ENCODE measurements at regions of chr12 and their contacts with region 1.

Region 1: DNA sequence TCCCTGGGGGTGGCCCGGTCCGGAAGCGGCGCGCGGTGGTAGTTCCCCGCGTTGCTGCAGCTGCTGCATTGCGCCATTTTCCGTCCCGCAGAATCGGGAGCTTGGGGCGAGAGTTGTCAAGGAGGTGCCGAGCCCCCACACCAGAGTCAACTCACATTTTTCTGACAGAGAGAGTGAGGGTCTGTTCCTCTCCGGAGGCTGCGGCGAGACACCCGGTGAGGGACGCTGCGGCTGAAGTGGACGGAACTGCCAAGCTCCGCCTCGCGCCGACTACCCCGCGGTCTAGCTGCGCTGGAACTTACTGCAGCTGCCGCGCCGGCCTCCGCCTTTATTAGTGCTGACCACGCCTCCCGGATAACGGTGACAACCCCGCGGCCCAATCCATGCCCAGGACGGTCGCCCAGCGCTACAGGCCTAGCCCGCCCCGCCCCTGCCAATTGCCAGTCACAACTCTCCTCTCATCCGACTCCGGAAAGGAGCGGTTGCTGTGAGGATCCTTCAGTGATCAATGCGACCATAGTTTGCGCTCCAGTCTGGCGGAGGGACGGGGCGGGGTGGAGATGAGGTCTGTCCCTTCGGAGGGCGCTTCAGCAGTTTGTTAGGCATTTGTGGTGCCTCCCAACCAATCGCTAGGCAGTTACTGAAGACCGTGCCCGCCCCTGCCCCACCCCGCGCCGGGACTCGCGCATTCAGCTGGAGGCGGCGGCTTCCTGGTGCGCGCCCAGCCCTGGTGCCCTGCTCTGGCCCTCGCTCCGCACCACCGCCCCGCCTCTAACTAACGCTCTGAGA is at the start of gene VAMP1:
- DNase-seq: peak; percentile 99
- ATAC-seq: peak; percentile 96
- H3K4me3 Mint-ChIP-seq: peak within 1 kb of the TSS; percentile 68
- H3K27ac Mint-ChIP-seq: peak within 1 kb of the TSS; percentile 93
- H3K4me1 Mint-ChIP-seq: peaks cover 20% of the 10 kb centered on the region
- H3K27me3 Mint-ChIP-seq: peaks cover 18% of the 10 kb centered on the region
- CTCF ChIP-seq: no peak
- total RNA-seq, gene VAMP1: 12.8 to 14.3 TPM (median 13.8 TPM) in 3 replicates

Region 2: GRCh38 chr12:6341417-6342139 is 129.0 kb before region 1 on chr12 and contains the start of gene TNFRSF1A:
- CTCF ChIA-PET with region 1: interaction called, 20 read pairs
- POLR2A ChIA-PET with region 1: interaction called, 18 read pairs
- DNase-seq: no peak
- ATAC-seq: peak; percentile 47
- H3K4me3 Mint-ChIP-seq: no peak within 1 kb of the TSS
- H3K27ac Mint-ChIP-seq: peak within 1 kb of the TSS; percentile 86
- H3K4me1 Mint-ChIP-seq: peaks cover 32% of the 10 kb centered on the region
- H3K27me3 Mint-ChIP-seq: no peaks in the 10 kb centered on the region
- CTCF ChIP-seq: no peak
- total RNA-seq, gene TNFRSF1A: 32.3 to 44.1 TPM (median 32.4 TPM) in 3 replicates

Region 3: DNA sequence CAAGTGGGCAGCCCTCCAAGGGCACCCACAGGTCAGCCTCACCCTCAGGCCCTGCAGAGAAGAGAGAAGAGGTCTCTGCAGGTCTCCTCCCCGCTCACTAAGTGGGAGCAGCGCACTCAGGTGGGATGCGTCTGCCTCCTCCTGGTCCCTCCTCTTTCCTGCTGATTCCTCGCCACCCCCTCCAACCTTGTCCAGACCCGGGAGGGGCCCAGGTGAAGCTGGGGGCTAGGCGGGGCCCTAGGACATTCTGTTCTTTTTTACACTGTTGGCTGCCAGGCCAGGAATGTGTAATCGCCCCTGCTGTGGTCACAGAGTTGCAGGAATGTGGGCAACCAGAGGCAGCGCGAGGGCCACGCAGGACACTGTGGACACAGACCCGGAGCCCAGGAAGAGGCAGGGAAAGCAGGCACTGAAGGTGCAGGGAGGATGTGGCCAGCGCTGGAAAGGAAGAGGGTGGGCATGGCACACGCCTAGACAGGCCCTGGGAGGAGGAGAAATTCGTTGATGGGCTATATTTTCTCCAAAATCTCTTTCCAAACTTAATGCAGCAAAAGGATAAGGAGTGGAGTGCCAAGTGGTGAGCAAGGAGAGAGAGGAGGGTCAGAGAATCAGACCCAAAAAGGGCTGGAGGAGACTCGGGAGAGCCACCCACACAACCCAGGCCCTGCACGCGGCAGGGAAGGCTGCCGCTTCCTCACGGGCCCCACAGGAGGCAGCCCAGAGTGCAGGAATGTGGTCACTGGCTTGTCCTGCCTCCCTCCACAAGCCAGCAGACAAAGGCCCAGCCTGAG is 94.3 kb before region 1 on chr12:
- CTCF ChIA-PET with region 1: interaction called, 11 read pairs
- POLR2A ChIA-PET with region 1: interaction called, 6 read pairs
- DNase-seq: peak; percentile 76
- ATAC-seq: peak; percentile 61
- H3K4me3 Mint-ChIP-seq: peak overlapping the region; percentile 91
- H3K27ac Mint-ChIP-seq: peak overlapping the region; percentile 99
- H3K4me1 Mint-ChIP-seq: peaks cover 77% of the 10 kb centered on the region
- H3K27me3 Mint-ChIP-seq: peaks cover 3% of the 10 kb centered on the region
- CTCF ChIP-seq: no peak

Region 4: DNA sequence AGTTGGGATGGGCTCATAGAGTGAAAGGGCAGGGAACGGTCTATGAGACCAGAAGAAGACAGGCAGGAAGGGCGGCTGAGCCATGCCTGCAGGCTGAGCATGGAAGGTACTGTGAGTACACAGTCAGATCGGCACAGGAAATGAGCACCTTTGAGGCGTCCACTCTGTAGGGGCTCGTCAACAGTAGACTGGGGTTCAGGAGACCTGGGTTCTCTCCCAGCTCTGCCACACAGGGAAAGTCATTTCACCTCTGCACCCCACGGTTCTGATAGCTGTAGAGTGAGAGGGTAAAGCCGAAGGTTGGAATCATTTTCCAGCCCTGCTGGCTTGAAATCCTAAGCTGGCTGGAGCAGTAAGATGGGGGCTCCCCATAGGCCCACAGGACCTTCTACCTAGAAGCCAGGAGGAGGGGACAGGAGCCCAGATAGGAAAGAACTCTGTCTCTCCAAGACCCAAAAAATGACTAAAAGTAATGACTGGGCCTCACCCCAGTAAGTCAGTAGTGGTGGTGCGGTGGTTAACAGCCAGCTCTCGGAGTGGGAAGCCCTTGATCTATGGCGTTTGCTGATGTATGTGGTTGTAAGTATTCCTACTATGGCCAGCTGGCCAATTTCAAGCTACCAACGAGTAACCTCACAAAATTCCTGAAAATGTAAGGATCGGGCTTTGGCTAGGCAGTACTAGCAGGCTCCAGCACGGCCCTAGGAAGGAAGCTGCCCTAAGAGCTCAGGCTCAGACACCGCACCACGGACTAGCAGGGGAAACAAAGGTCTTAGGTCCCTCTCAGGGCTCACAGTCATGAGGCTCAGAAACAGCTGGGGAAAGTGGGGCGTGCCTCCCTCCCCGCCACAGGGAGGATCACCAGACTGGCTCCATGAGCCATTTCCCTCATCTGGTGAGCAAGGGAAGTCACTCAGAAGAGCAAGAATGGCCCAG is 36.1 kb before region 1 on chr12:
- CTCF ChIA-PET with region 1: interaction called, 26 read pairs
- POLR2A ChIA-PET with region 1: interaction called, 6 read pairs
- DNase-seq: no peak
- ATAC-seq: peak; percentile 78
- H3K4me3 Mint-ChIP-seq: no peak overlapping the region
- H3K27ac Mint-ChIP-seq: peak overlapping the region; percentile 79
- H3K4me1 Mint-ChIP-seq: peaks cover 32% of the 10 kb centered on the region
- H3K27me3 Mint-ChIP-seq: no peaks in the 10 kb centered on the region
- CTCF ChIP-seq: no peak

Region 5: GRCh38 chr12:6493497-6494257 is 23.1 kb after region 1 on chr12 and contains the start of gene NCAPD2:
- CTCF ChIA-PET with region 1: interaction called, 8 read pairs
- POLR2A ChIA-PET with region 1: interaction called, 17 read pairs
- DNase-seq: peak; percentile 93
- ATAC-seq: peak; percentile 91
- H3K4me3 Mint-ChIP-seq: peak within 1 kb of the TSS; percentile 93
- H3K27ac Mint-ChIP-seq: peak within 1 kb of the TSS; percentile 97
- H3K4me1 Mint-ChIP-seq: peaks cover 25% of the 10 kb centered on the region
- H3K27me3 Mint-ChIP-seq: no peaks in the 10 kb centered on the region
- CTCF ChIP-seq: no peak
- total RNA-seq, gene NCAPD2: 131 to 141 TPM (median 133 TPM) in 3 replicates